CD4-positive, alpha-beta memory T cell (primary cell): ENCODE measurements at regions of chr1 and their contacts with region 1.

Region 1: DNA sequence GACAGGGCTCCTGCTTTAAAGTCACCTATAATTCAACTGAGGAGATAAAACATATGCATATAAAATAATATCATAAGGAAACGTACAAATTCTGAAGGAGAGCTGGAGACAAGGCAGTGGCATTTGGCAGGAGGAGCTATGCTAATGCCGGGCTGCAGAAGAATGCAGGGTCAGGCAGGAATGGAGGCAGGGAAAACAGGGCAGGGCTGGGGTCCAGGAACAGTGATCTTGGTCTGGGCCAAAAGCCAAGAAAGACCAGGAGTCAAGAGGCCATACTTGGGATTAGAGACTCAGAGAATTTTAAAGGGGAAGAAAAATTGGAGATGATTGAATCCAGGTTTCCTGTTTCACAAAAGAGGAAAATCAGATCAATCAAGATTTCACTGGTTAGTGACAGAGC is 20.0 kb upstream of the BRDT start:
- DNase-seq: no peak
- H3K4me3 ChIP-seq: no peak overlapping the region
- H3K4me3 Mint-ChIP-seq: no peak overlapping the region
- H3K27ac ChIP-seq: no peak overlapping the region
- H3K27ac Mint-ChIP-seq: peak overlapping the region in 2 of 7 donors; percentile 61 to 74
- H3K4me1 ChIP-seq: no peaks in the 10 kb centered on the region
- H3K4me1 Mint-ChIP-seq: peaks cover under 1 to 2% (median 1%) of the 10 kb centered on the region in 4 donors
- H3K27me3 ChIP-seq: no peaks in the 10 kb centered on the region
- H3K27me3 Mint-ChIP-seq: no peaks in the 10 kb centered on the region

Region 2: DNA sequence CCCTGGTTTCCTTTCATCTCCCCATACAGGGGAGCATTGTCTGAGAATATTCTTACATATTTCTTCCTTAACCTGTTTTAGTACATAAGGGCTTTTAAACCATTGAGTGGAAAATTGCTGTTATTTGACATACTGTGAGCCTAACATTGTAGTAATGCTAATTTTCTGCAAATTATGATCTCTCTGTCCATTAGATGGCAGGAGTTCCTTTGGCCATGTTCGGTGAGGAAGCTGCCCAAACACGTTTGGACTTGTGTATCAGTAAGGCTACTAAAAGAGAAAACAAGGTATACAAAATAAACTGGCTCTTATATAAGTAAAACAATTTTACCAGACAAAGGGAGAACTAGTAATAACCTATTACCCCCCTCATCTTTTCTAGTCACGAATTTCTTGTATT is 399.4 kb before region 1 on chr1:
- CTCF ChIA-PET with region 1: interaction called, 31 read pairs
- POLR2A ChIA-PET with region 1: no interaction called
- intact Hi-C with region 1: no loop called
- DNase-seq: peak in 1 of 5 donors; percentile 14
- H3K4me3 ChIP-seq: no peak overlapping the region
- H3K4me3 Mint-ChIP-seq: peak overlapping the region in 1 of 8 donors; percentile 6
- H3K27ac ChIP-seq: no peak overlapping the region
- H3K27ac Mint-ChIP-seq: peak overlapping the region in 4 of 7 donors; percentile 8 to 92 (median 64)
- H3K4me1 ChIP-seq: peaks cover 24% of the 10 kb centered on the region
- H3K4me1 Mint-ChIP-seq: peaks cover 22 to 34% (median 25%) of the 10 kb centered on the region in 4 donors
- H3K27me3 ChIP-seq: no peaks in the 10 kb centered on the region
- H3K27me3 Mint-ChIP-seq: no peaks in the 10 kb centered on the region

Region 3: GRCh38 chr1:91831132-91831930 is 97.9 kb before region 1 on chr1:
- CTCF ChIA-PET with region 1: no interaction called
- POLR2A ChIA-PET with region 1: no interaction called
- intact Hi-C with region 1: no loop called
- DNase-seq: no peak
- H3K4me3 ChIP-seq: no peak overlapping the region
- H3K4me3 Mint-ChIP-seq: no peak overlapping the region
- H3K27ac ChIP-seq: no peak overlapping the region
- H3K27ac Mint-ChIP-seq: peak overlapping the region in 3 of 7 donors; percentile 32 to 61 (median 59)
- H3K4me1 ChIP-seq: peaks cover 28% of the 10 kb centered on the region
- H3K4me1 Mint-ChIP-seq: peaks cover 24 to 66% (median 38%) of the 10 kb centered on the region in 4 donors
- H3K27me3 ChIP-seq: no peaks in the 10 kb centered on the region
- H3K27me3 Mint-ChIP-seq: no peaks in the 10 kb centered on the region

Region 4: DNA sequence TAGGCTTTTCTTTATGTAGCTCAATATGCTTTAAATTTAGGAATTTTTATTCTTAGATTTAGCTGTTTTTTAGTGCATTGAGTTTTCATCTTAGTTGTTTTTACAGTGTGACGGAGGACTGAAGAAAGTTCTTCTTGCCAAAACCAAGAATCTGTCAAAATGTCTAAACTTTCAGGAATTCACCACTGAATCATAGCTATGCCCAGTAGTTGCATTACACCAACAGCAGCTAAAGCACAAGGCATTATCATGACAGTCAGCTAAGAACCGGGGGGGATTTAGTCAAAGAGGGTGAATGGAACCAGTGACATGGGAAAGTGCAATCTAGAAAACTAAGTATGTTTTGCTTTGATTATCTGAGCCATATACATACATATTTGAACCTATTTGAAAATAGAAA is 281.9 kb after region 1 on chr1:
- CTCF ChIA-PET with region 1: no interaction called
- POLR2A ChIA-PET with region 1: no interaction called
- intact Hi-C with region 1: no loop called
- DNase-seq: no peak
- H3K4me3 ChIP-seq: no peak overlapping the region
- H3K4me3 Mint-ChIP-seq: no peak overlapping the region
- H3K27ac ChIP-seq: no peak overlapping the region
- H3K27ac Mint-ChIP-seq: no peak overlapping the region
- H3K4me1 ChIP-seq: peaks cover 5% of the 10 kb centered on the region
- H3K4me1 Mint-ChIP-seq: peaks cover 0 to 14% (median 11%) of the 10 kb centered on the region in 4 donors
- H3K27me3 ChIP-seq: no peaks in the 10 kb centered on the region
- H3K27me3 Mint-ChIP-seq: peaks cover 1% of the 10 kb centered on the region in 2 donors

Region 5: GRCh38 chr1:92623187-92623778 is 694.0 kb after region 1 on chr1:
- CTCF ChIA-PET with region 1: interaction called, 4 read pairs
- POLR2A ChIA-PET with region 1: no interaction called
- intact Hi-C with region 1: loop called (anchors 5 kb)
- DNase-seq: peak in 4 of 5 donors; percentile 29 to 42 (median 36)
- H3K4me3 ChIP-seq: no peak overlapping the region
- H3K4me3 Mint-ChIP-seq: no peak overlapping the region
- H3K27ac ChIP-seq: no peak overlapping the region
- H3K27ac Mint-ChIP-seq: no peak overlapping the region
- H3K4me1 ChIP-seq: no peaks in the 10 kb centered on the region
- H3K4me1 Mint-ChIP-seq: no peaks in the 10 kb centered on the region
- H3K27me3 ChIP-seq: no peaks in the 10 kb centered on the region
- H3K27me3 Mint-ChIP-seq: no peaks in the 10 kb centered on the region